GM23248 (cell line): ENCODE measurements at regions of chr5 and their contacts with region 1.

Region 1: DNA sequence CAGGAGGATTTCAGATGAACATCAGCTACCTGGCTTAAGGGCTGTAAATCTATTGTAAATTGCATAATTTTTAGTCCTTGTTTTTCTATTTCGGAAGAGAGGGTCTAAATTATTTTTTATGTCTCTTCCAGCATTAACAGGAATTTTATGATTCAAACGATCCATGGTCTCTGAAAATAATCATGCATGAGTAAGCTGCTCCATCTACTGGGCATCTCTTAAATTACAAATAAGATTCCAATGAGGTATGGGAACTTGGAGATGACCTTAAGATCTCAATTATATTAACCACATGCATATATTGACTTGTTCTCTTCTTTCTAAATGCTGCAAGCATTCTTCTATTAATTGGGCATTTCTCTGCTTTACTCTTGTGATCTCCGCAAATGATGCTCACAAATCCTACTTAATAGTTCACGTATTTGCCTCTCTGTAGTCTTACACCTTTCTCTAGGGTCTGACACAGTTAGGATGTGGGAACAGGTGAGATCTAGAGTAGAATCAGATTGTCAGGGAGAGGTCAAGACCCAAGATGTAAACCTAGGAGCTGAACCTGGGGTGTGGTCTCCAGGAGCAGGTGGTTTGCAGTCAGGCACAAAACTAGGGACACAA is 86.9 kb downstream of the NUDT12 start:
- DNase-seq: peak; percentile 69
- H3K4me3 ChIP-seq: no peak overlapping the region
- H3K27ac ChIP-seq: no peak overlapping the region
- H3K4me1 ChIP-seq: peaks cover 24% of the 10 kb centered on the region
- H3K27me3 ChIP-seq: no peaks in the 10 kb centered on the region

Region 2: DNA sequence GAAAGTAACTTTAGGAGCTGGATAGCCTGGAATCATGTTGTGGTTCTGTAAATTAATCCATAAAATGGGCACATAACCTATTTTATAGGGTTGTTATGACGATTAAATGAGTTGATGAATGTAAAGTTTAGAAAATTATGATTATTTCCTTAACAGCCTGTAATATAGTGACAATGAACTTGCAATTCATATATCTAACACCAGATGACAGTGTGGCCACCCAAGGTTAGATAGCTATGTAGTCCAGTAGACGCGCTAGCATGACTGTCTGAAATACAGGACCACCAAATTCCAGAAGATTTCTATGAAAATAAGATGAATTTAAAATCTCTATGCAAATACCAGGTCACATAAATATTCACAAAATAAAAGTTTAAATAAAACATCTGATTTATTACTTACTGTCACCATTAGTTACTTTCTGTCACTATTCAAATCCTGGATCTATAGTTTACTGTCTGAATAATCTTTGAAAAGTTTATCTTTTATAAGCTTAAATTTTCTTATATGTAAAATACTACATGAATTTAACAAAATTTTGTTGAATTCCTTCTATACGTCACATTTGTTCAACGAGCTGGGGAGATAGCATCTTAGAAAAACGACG is 243.2 kb before region 1 on chr5:
- in situ Hi-C with region 1: loop called (anchors 10 kb)
- DNase-seq: peak; percentile 69
- H3K4me3 ChIP-seq: no peak overlapping the region
- H3K27ac ChIP-seq: no peak overlapping the region
- H3K4me1 ChIP-seq: 0 out of 2 replicates have a peak, but pooled peaks cover 9% of the 10 kb centered on the region
- H3K27me3 ChIP-seq: no peaks in the 10 kb centered on the region

Region 3: GRCh38 chr5:103886826-103887225 is 411.1 kb after region 1 on chr5:
- in situ Hi-C with region 1: no loop called
- DNase-seq: no peak
- H3K4me3 ChIP-seq: no peak overlapping the region
- H3K27ac ChIP-seq: no peak overlapping the region
- H3K4me1 ChIP-seq: no peaks in the 10 kb centered on the region
- H3K27me3 ChIP-seq: no peaks in the 10 kb centered on the region